OCI-LY7 (cell line): ENCODE measurements at regions of chr2 and their contacts with region 1.

Region 1: GRCh38 chr2:160210599-160211138 is 10.6 kb upstream of the ITGB6 start:
- DNase-seq: peak; percentile 71
- H3K4me3 ChIP-seq: no peak overlapping the region
- H3K27ac ChIP-seq: no peak overlapping the region
- H3K4me1 ChIP-seq: no peaks in the 10 kb centered on the region
- CTCF ChIP-seq: peak; percentile 97

Region 2: GRCh38 chr2:160062292-160063005 is 148.2 kb before region 1 on chr2 and contains the start of gene PLA2R1:
- CTCF ChIA-PET with region 1: no interaction called
- POLR2A ChIA-PET with region 1: no interaction called
- intact Hi-C with region 1: no loop called
- DNase-seq: no peak
- H3K4me3 ChIP-seq: no peak within 1 kb of the TSS
- H3K27ac ChIP-seq: no peak within 1 kb of the TSS
- H3K4me1 ChIP-seq: no peaks in the 10 kb centered on the region
- CTCF ChIP-seq: no peak
- total RNA-seq, gene PLA2R1: not detected in 2 replicates

Region 3: GRCh38 chr2:160109936-160110673 is 100.6 kb before region 1 on chr2:
- CTCF ChIA-PET with region 1: interaction called, 3 read pairs
- POLR2A ChIA-PET with region 1: no interaction called
- intact Hi-C with region 1: loop called (anchors 1 kb)
- DNase-seq: peak; percentile 59
- H3K4me3 ChIP-seq: no peak overlapping the region
- H3K27ac ChIP-seq: no peak overlapping the region
- H3K4me1 ChIP-seq: no peaks in the 10 kb centered on the region
- CTCF ChIP-seq: peak; percentile 86

Region 4: DNA sequence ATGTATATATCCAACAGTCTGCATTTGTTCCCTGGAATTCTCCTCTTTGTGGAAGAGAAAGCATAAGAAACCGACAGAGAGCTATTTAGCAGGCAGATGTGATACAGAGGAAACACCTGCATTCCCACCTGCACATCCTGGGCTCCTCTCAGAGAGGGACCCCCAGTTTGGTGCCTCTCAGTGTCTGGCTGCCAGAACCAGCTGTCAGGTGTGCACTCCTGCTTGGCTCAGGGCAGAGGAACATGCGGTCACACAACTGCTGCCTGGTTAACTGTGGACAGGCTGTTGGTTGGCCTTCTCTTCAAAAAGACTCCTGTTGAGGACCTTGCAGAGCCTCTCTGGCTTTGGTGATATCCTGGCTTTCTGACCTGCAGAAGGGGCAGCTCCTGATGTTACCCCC is 65.2 kb before region 1 on chr2:
- CTCF ChIA-PET with region 1: no interaction called
- POLR2A ChIA-PET with region 1: interaction called, 4 read pairs
- intact Hi-C with region 1: loop called (anchors 5 kb)
- DNase-seq: peak; percentile 25
- H3K4me3 ChIP-seq: no peak overlapping the region
- H3K27ac ChIP-seq: no peak overlapping the region
- H3K4me1 ChIP-seq: peaks cover 9% of the 10 kb centered on the region
- CTCF ChIP-seq: no peak

Region 5: GRCh38 chr2:160317181-160318099 is 106.8 kb after region 1 on chr2:
- CTCF ChIA-PET with region 1: no interaction called
- POLR2A ChIA-PET with region 1: no interaction called
- intact Hi-C with region 1: no loop called
- DNase-seq: no peak
- H3K4me3 ChIP-seq: no peak overlapping the region
- H3K27ac ChIP-seq: no peak overlapping the region
- H3K4me1 ChIP-seq: no peaks in the 10 kb centered on the region
- CTCF ChIP-seq: no peak